Caki2 (cell line): ENCODE measurements at regions of chr10 and their contacts with region 1.

Region 1: GRCh38 chr10:99430451-99431189 is at the start of gene GOT1:
- DNase-seq: peak; percentile 99
- total RNA-seq, gene GOT1: 18.8 and 25.4 TPM in 2 replicates

Region 2: GRCh38 chr10:99620713-99621453 is 190.3 kb after region 1 on chr10:
- in situ Hi-C with region 1: loop called (anchors 25 kb)
- DNase-seq: peak; percentile 92